SK-N-SH (cell line): ENCODE measurements at regions of chr15 and their contacts with region 1.

Region 1: DNA sequence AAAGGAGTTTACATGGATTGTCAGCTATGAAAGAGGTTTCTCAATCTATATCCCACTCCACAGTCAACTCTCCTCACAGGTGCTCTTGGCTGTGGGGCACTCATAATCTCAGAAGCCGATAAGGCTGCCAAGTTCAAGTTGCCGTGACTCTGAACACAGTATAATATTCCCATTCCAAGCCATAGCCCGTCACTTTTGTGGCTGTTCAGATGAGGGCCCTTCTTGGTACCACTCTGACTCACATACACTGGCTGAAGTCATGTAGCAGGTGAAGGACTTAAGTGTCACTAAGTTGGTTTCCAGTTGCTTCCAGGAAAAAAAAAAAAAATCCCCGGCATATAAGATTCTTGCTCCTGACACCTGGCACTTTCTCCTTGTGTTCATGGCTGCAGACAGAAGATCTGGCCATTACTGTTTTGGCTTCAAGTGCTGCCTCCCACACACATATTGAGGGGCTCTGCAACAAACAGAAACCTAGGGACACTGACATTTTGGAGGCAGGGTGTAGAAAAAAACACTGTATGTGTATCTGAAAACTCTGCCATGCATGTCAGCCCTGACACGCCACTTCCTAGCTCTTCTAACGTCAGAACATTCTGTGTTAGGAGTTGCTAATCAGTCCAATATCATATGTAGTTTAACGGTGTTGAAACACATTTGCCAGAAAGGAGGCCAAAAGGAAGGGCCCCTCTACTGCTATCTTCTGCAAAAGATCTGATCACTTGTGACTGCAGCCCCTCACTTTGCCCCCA is 170.2 kb upstream of the ICE2 start:
- DNase-seq: no peak
- H3K4me3 ChIP-seq: no peak overlapping the region
- H3K27ac ChIP-seq: no peak overlapping the region
- H3K4me1 ChIP-seq: peaks cover 0 to 11% of the 10 kb centered on the region in 2 experiments; a peak in 2 of 4 replicates
- H3K27me3 ChIP-seq: no peaks in the 10 kb centered on the region
- CTCF ChIP-seq: no peak
- EP300 ChIP-seq: no peak
- RAD21 ChIP-seq: no peak

Region 2: DNA sequence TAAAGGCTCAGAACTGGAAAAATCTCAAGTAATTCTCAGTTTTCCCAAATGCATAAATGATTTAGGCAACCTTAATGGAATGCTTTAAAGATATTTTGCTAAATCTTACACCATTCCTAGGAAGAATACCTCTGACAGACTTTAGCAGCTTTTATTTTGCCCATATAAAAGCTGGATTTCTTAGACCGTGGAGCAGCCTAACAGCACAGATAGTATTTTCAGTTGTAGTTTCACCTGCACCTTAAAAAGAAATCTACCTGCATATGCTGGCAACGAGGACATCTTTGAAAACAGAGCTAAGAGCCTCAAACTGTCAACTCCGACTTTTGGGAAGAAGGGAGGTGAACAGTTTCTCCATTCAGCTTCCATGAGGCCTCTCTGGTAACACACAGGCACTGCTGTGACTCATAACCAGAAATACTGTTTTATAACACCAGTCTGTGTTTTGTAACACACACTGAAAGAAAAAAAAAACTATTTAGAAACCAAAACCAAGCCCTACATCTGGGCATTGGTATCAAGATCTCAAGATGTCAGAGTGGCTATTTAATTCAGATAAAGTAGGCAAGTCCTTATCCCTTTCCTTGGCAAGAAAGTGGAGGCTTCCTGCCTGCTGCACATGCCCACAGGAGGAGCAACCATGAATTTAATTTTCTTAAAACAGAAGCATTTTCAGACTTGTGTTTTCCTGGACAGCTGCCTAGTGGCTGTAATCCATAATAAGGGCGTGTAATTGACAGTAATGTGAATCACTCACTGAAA is 11.4 kb after region 1 on chr15:
- CTCF ChIA-PET with region 1: interaction called, 12 read pairs
- POLR2A ChIA-PET with region 1: no interaction called
- DNase-seq: peak; percentile 35
- H3K4me3 ChIP-seq: no peak overlapping the region
- H3K27ac ChIP-seq: peak overlapping the region; percentile 51 to 86
- H3K4me1 ChIP-seq: peaks cover 11 to 17% of the 10 kb centered on the region in 2 experiments
- H3K27me3 ChIP-seq: no peaks in the 10 kb centered on the region
- CTCF ChIP-seq: no peak
- EP300 ChIP-seq: peak in 1 of 2 experiments; percentile 75; a peak in 1 of 4 replicates
- RAD21 ChIP-seq: 0 out of 2 replicates have a peak, but pooled peaks have one; percentile 11

Region 3: GRCh38 chr15:60883691-60884640 is 234.9 kb after region 1 on chr15:
- CTCF ChIA-PET with region 1: no interaction called
- POLR2A ChIA-PET with region 1: no interaction called
- DNase-seq: no peak
- H3K4me3 ChIP-seq: no peak overlapping the region
- H3K27ac ChIP-seq: no peak overlapping the region
- H3K4me1 ChIP-seq: peaks cover 0 to 1% of the 10 kb centered on the region in 2 experiments; a peak in 1 of 4 replicates
- H3K27me3 ChIP-seq: no peaks in the 10 kb centered on the region
- CTCF ChIP-seq: no peak
- EP300 ChIP-seq: no peak
- RAD21 ChIP-seq: no peak